GM10248 (cell line): ENCODE measurements at regions of chr9 and their contacts with region 1.

Region 1: GRCh38 chr9:17052626-17053025 is 82.2 kb upstream of the CNTLN start:
- DNase-seq: no peak
- CTCF ChIP-seq: no peak

Region 2: DNA sequence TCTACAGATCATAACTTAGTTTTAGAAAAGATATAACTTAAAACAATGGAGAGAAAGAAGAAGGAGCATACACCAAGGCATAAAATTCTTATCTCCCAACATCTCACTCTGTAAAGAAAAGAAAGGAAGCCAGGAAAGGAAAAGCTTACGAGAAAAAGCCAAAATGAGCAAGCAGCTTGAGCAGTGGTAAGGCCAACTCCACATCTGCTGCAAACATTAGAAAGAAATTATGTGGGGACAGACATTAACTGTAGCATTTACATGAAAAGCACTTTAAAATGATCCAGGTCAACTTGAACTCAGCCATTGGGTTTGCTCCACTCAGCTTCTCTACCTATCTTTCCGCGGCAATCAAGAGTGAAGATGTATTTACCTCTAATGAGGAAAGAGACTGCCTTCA is 359.0 kb before region 1 on chr9:
- CTCF ChIA-PET with region 1: no interaction called
- POLR2A ChIA-PET with region 1: no interaction called
- DNase-seq: no peak
- CTCF ChIP-seq: no peak

Region 3: GRCh38 chr9:17063535-17064135 is 11.0 kb after region 1 on chr9:
- CTCF ChIA-PET with region 1: interaction called, 11 read pairs
- POLR2A ChIA-PET with region 1: no interaction called
- DNase-seq: peak; percentile 16
- CTCF ChIP-seq: peak; percentile 64

Region 4: DNA sequence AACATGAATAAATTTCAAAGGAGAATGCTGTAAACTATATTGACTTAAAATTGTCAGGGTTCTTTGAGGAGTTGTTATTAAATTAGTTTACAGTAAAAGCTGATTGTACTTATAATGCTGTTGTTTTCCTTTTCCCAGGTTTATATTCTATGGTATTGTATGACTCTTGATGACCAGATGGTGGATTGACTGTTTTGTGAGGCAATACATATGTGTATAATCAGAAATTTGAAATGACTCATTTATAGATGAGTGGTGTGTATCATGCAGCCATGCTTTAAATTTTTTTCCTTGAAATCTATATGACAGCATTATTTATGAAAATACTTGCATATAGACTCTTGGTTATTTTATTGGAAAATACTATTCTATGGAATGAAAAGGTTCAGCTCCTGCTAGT is 277.5 kb after region 1 on chr9:
- CTCF ChIA-PET with region 1: no interaction called
- POLR2A ChIA-PET with region 1: no interaction called
- DNase-seq: no peak
- CTCF ChIP-seq: no peak

Region 5: DNA sequence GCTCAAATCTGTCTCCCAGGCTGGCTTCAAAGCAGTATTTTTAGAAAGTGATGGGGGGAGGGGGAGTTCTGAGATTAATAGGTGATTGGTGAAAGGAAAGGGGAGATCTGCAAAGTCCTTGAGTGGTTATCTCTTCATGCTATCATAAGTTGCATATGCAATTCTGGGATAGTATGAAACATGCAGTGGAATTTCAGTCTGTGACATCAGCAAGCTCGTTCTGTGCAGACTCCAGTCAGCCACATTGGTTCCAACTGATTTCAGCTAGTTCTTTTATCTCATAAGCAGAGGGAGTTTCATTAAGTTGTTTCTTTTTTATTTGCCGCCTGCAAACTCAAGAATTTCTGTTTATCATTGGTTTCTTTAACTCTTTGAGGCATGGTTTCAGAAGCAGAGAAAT is 345.7 kb after region 1 on chr9:
- CTCF ChIA-PET with region 1: no interaction called
- POLR2A ChIA-PET with region 1: no interaction called
- DNase-seq: no peak
- CTCF ChIP-seq: no peak